ENCODE measurements at regions of chr7 and their contacts with region 1.

Region 1: DNA sequence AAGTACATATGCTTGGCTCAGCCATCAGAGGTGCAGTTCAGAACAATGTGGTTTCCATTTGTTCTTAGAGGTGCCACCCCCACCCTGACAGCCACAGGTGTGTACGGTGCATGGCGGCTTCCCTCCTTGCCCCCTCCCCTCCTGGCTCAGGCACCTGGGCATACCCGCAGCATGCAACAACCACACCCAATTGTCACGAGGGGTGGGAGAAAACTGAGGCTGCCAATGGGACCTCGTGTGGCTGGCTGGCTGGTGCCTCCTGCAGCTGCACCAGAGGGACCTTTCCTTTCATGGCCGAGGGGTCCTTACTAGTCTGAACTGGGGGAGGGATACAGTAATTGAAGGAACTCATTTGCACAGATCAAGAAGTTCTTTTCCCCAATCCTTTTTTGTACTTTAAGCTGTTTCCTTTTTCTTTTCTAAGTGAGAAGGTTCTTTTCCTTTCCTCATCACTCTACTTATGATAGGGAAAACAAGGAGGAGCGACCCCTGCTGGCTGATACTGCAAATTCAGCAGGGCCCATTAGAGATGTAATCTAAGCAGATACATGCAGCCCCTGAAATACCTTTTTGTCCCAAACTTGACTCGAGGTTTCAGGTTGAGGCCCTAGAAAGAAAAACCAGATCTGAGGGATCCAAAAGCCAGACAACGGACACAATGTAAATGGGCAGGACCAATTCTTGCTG is 305.3 kb downstream of the DNAJB9 start:
- DNase-seq: no peak
- ATAC-seq: peak; percentile 87
- H3K4me3 ChIP-seq: no peak overlapping the region
- H3K27ac ChIP-seq: no peak overlapping the region
- H3K4me1 ChIP-seq: no peaks in the 10 kb centered on the region
- H3K27me3 ChIP-seq: no peaks in the 10 kb centered on the region
- CTCF ChIP-seq: peak; percentile 35 to 60 (median 48)
- EP300 ChIP-seq: no peak
- POLR2A ChIP-seq: no peak
- RAD21 ChIP-seq: 0 out of 2 replicates have a peak, but pooled peaks have one; percentile 10

Region 2: GRCh38 chr7:108613112-108613759 is 261.8 kb before region 1 on chr7:
- CTCF ChIA-PET with region 1: interaction called, 3 read pairs
- POLR2A ChIA-PET with region 1: no interaction called
- RAD21 ChIA-PET with region 1: no interaction called
- SMC1A ChIA-PET with region 1: no interaction called
- in situ Hi-C with region 1: no loop called
- intact Hi-C with region 1: loop called (anchors 1 kb)
- DNase-seq: no peak
- ATAC-seq: peak; percentile 83
- H3K4me3 ChIP-seq: no peak overlapping the region
- H3K27ac ChIP-seq: no peak overlapping the region
- H3K4me1 ChIP-seq: no peaks in the 10 kb centered on the region
- H3K27me3 ChIP-seq: peaks cover 0 to 4% of the 10 kb centered on the region in 2 experiments; a peak in 1 of 4 replicates
- CTCF ChIP-seq: peak; percentile 46 to 71 (median 50); a peak in 5 of 6 replicates
- EP300 ChIP-seq: no peak
- POLR2A ChIP-seq: no peak
- RAD21 ChIP-seq: peak; percentile 78

Region 3: GRCh38 chr7:108805808-108806397 is 69.1 kb before region 1 on chr7:
- CTCF ChIA-PET with region 1: interaction called, 4 read pairs
- POLR2A ChIA-PET with region 1: no interaction called
- RAD21 ChIA-PET with region 1: no interaction called
- SMC1A ChIA-PET with region 1: interaction called, 4 read pairs
- in situ Hi-C with region 1: no loop called
- intact Hi-C with region 1: loop called (anchors 2 kb)
- DNase-seq: no peak
- ATAC-seq: peak; percentile 75
- H3K4me3 ChIP-seq: no peak overlapping the region
- H3K27ac ChIP-seq: no peak overlapping the region
- H3K4me1 ChIP-seq: no peaks in the 10 kb centered on the region
- H3K27me3 ChIP-seq: no peaks in the 10 kb centered on the region
- CTCF ChIP-seq: peak; percentile 31 to 52 (median 46); a peak in 5 of 6 replicates
- EP300 ChIP-seq: no peak
- POLR2A ChIP-seq: no peak
- RAD21 ChIP-seq: peak; percentile 31

Region 4: GRCh38 chr7:108911016-108911415 is 36.0 kb after region 1 on chr7:
- CTCF ChIA-PET with region 1: no interaction called
- POLR2A ChIA-PET with region 1: no interaction called
- RAD21 ChIA-PET with region 1: no interaction called
- SMC1A ChIA-PET with region 1: no interaction called
- in situ Hi-C with region 1: no loop called
- intact Hi-C with region 1: no loop called
- DNase-seq: no peak
- ATAC-seq: no peak
- H3K4me3 ChIP-seq: no peak overlapping the region
- H3K27ac ChIP-seq: no peak overlapping the region
- H3K4me1 ChIP-seq: no peaks in the 10 kb centered on the region
- H3K27me3 ChIP-seq: no peaks in the 10 kb centered on the region
- CTCF ChIP-seq: no peak
- EP300 ChIP-seq: no peak
- POLR2A ChIP-seq: no peak
- RAD21 ChIP-seq: no peak

Region 5: GRCh38 chr7:109498131-109498530 is 623.1 kb after region 1 on chr7:
- CTCF ChIA-PET with region 1: no interaction called
- POLR2A ChIA-PET with region 1: no interaction called
- RAD21 ChIA-PET with region 1: no interaction called
- SMC1A ChIA-PET with region 1: no interaction called
- in situ Hi-C with region 1: no loop called
- intact Hi-C with region 1: no loop called
- DNase-seq: no peak
- ATAC-seq: no peak
- H3K4me3 ChIP-seq: no peak overlapping the region
- H3K27ac ChIP-seq: no peak overlapping the region
- H3K4me1 ChIP-seq: no peaks in the 10 kb centered on the region
- H3K27me3 ChIP-seq: no peaks in the 10 kb centered on the region
- CTCF ChIP-seq: no peak
- EP300 ChIP-seq: no peak
- POLR2A ChIP-seq: no peak
- RAD21 ChIP-seq: no peak

Measured in GM12878 (cell line).